ENCODE measurements at regions of chr15 and their contacts with region 1.

Region 1: GRCh38 chr15:75647370-75648155 is at the start of gene SNX33:
- DNase-seq: peak; percentile 78
- ATAC-seq: peak; percentile 74
- H3K4me3 ChIP-seq: peak within 1 kb of the TSS; percentile 83 to 96 (median 93)
- H3K27ac ChIP-seq: peak within 1 kb of the TSS; percentile 98
- H3K4me1 ChIP-seq: peaks cover 50% of the 10 kb centered on the region
- H3K27me3 ChIP-seq: peaks cover 0 to 2% of the 10 kb centered on the region in 2 experiments; a peak in 1 of 5 replicates
- CTCF ChIP-seq: peak; percentile 70
- EP300 ChIP-seq: no peak
- POLR2A ChIP-seq: no peak; a peak in 1 of 4 replicates
- RAD21 ChIP-seq: no peak
- total RNA-seq, gene SNX33: 10.8 and 11.0 TPM in 2 replicates

Region 2: GRCh38 chr15:75453703-75454470 is 193.7 kb before region 1 on chr15:
- CTCF ChIA-PET with region 1: no interaction called
- POLR2A ChIA-PET with region 1: interaction called, 45 read pairs
- in situ Hi-C with region 1: no loop called
- intact Hi-C with region 1: no loop called
- DNase-seq: peak; percentile 100
- ATAC-seq: peak; percentile 38
- H3K4me3 ChIP-seq: peak overlapping the region; percentile 91 to 93 (median 93)
- H3K27ac ChIP-seq: peak overlapping the region; percentile 94
- H3K4me1 ChIP-seq: peaks cover 37% of the 10 kb centered on the region
- H3K27me3 ChIP-seq: no peaks in the 10 kb centered on the region; a peak in 1 of 5 replicates
- CTCF ChIP-seq: no peak
- EP300 ChIP-seq: no peak
- POLR2A ChIP-seq: peak in 1 of 2 experiments; percentile 62; a peak in 2 of 4 replicates
- RAD21 ChIP-seq: no peak

Region 3: GRCh38 chr15:75578948-75579920 is 68.3 kb before region 1 on chr15 and contains the start of gene PTPN9:
- CTCF ChIA-PET with region 1: no interaction called
- POLR2A ChIA-PET with region 1: interaction called, 13 read pairs
- in situ Hi-C with region 1: no loop called
- intact Hi-C with region 1: no loop called
- DNase-seq: peak; percentile 66
- ATAC-seq: peak; percentile 88
- H3K4me3 ChIP-seq: peak within 1 kb of the TSS; percentile 74 to 100 (median 87)
- H3K27ac ChIP-seq: peak within 1 kb of the TSS; percentile 93
- H3K4me1 ChIP-seq: peaks cover 37% of the 10 kb centered on the region
- H3K27me3 ChIP-seq: no peaks in the 10 kb centered on the region; a peak in 2 of 5 replicates
- CTCF ChIP-seq: peak; percentile 57
- EP300 ChIP-seq: no peak
- POLR2A ChIP-seq: peak in 1 of 2 experiments; percentile 28; a peak in 2 of 4 replicates
- RAD21 ChIP-seq: no peak
- total RNA-seq, gene PTPN9: 16.5 and 16.6 TPM in 2 replicates

Region 4: DNA sequence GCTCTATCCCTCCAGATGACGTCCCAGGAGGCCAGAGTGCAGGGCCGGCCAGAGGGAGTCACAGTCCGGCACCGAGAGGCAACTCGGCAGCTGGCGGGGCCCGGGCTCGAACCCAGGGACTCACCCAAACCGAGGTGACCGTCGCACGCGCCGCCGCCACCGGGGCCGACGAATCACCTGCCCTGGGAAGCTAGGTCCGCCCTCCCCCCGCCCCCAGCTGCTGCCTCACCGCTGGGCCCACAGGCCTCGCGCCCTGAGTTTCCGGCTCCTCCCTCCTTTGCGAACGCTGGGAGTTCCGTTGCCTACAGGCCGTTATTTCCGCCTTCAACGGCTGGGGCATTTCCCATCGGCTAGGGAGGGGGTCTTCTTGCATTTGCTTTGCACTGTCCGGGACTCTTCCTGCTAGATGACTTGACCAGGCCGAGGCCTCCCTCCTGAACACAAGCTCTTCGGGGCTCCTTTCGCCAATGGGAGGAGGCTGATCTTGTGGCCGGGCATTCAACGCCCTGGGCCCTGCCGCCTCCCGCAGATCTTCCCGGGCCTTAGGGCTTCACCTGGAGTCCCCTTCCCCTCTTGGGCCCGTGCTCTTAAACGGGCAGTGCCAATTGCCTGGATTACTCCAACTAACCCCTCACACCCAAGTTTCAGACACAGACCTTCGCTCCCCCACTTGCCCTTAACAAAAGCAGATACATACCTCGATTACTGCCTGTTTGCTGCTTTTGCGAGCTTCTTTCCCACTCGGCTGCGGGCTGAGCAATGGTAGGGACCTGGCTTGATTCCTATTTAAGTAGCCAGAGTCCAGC is 21.8 kb before region 1 on chr15 and contains the start of gene SNUPN:
- CTCF ChIA-PET with region 1: no interaction called
- POLR2A ChIA-PET with region 1: interaction called, 19 read pairs
- in situ Hi-C with region 1: no loop called
- intact Hi-C with region 1: no loop called
- DNase-seq: peak; percentile 91
- ATAC-seq: peak; percentile 91
- H3K4me3 ChIP-seq: peak within 1 kb of the TSS; percentile 89 to 100 (median 100)
- H3K27ac ChIP-seq: peak within 1 kb of the TSS; percentile 99
- H3K4me1 ChIP-seq: peaks cover 20% of the 10 kb centered on the region
- H3K27me3 ChIP-seq: no peaks in the 10 kb centered on the region; a peak in 1 of 5 replicates
- CTCF ChIP-seq: no peak
- EP300 ChIP-seq: peak in 1 of 2 experiments; percentile 52; a peak in 1 of 4 replicates
- POLR2A ChIP-seq: peak; percentile 45 to 76; a peak in 3 of 4 replicates
- RAD21 ChIP-seq: peak; percentile 9; the same call in 1 of the 2 replicates
- total RNA-seq, gene SNUPN: 16.4 and 18.3 TPM in 2 replicates

Region 5: GRCh38 chr15:75661091-75661777 is 13.7 kb after region 1 on chr15:
- CTCF ChIA-PET with region 1: no interaction called
- POLR2A ChIA-PET with region 1: interaction called, 16 read pairs
- in situ Hi-C with region 1: no loop called
- intact Hi-C with region 1: no loop called
- DNase-seq: peak; percentile 45
- ATAC-seq: peak; percentile 87
- H3K4me3 ChIP-seq: peak overlapping the region in 1 of 3 experiments; percentile 27; a peak in 2 of 6 replicates
- H3K27ac ChIP-seq: no peak overlapping the region
- H3K4me1 ChIP-seq: peaks cover 48% of the 10 kb centered on the region
- H3K27me3 ChIP-seq: no peaks in the 10 kb centered on the region
- CTCF ChIP-seq: no peak
- EP300 ChIP-seq: no peak
- POLR2A ChIP-seq: no peak
- RAD21 ChIP-seq: no peak

Region 6: GRCh38 chr15:75684642-75685041 is 37.1 kb after region 1 on chr15:
- CTCF ChIA-PET with region 1: no interaction called
- POLR2A ChIA-PET with region 1: interaction called, 4 read pairs
- in situ Hi-C with region 1: loop called (anchors 5 kb)
- intact Hi-C with region 1: loop called (anchors 2 kb)
- DNase-seq: peak; percentile 56
- ATAC-seq: peak; percentile 44
- H3K4me3 ChIP-seq: peak overlapping the region in 1 of 3 experiments; percentile 33; a peak in 1 of 6 replicates
- H3K27ac ChIP-seq: no peak overlapping the region
- H3K4me1 ChIP-seq: peaks cover 41% of the 10 kb centered on the region
- H3K27me3 ChIP-seq: peaks cover 6 to 25% of the 10 kb centered on the region in 2 experiments
- CTCF ChIP-seq: peak; percentile 69
- EP300 ChIP-seq: no peak
- POLR2A ChIP-seq: no peak
- RAD21 ChIP-seq: peak; percentile 44; the same call in 1 of the 2 replicates

Region 7: DNA sequence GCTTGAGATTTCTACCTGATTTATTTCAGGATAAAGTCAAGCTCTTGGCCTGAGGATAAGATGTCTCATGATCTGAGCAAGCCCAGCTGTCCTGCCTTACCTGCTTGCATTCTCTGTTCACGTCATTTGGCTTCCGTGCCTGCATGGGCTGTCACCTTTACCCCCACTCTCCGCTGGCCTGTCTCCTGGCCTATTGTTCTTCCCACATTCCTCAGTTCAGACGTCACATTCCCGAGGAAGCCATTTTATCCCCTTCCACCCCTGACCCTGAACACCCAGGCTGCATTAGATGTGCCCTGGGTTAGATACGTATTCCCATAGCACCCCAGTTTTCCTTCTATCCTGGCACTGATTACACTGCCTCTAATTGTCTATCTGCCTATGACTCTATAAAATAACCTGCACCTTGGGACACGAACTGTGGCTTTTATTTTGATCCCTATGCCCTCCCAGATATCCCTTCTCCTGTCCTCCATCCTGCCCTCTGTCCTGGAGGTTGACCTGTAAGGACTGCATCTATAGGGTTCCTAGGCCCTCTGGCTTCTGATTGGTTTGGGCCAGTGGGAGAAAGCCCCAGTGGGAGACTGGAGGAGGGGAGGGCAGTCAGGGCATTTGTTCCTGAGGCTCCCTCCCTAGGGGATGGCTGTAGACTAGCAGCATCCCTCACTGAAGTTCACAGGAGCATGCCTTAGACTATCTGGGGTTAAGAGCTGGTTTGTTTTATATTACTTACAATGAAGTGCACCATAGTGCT is 176.5 kb after region 1 on chr15:
- CTCF ChIA-PET with region 1: no interaction called
- POLR2A ChIA-PET with region 1: no interaction called
- in situ Hi-C with region 1: no loop called
- intact Hi-C with region 1: no loop called
- DNase-seq: peak; percentile 42
- ATAC-seq: peak; percentile 51; the same call in 2 of the 3 replicates
- H3K4me3 ChIP-seq: no peak overlapping the region; a peak in 1 of 6 replicates
- H3K27ac ChIP-seq: no peak overlapping the region
- H3K4me1 ChIP-seq: peaks cover 7% of the 10 kb centered on the region
- H3K27me3 ChIP-seq: peaks cover 0 to 17% of the 10 kb centered on the region in 2 experiments; a peak in 2 of 5 replicates
- CTCF ChIP-seq: no peak
- EP300 ChIP-seq: no peak
- POLR2A ChIP-seq: no peak
- RAD21 ChIP-seq: no peak

Region 8: GRCh38 chr15:75836953-75837321 is 189.4 kb after region 1 on chr15:
- CTCF ChIA-PET with region 1: no interaction called
- POLR2A ChIA-PET with region 1: no interaction called
- in situ Hi-C with region 1: no loop called
- intact Hi-C with region 1: no loop called
- DNase-seq: no peak
- ATAC-seq: no peak
- H3K4me3 ChIP-seq: no peak overlapping the region
- H3K27ac ChIP-seq: no peak overlapping the region
- H3K4me1 ChIP-seq: peaks cover 5% of the 10 kb centered on the region; the same call in 1 of the 2 replicates
- H3K27me3 ChIP-seq: peaks cover 4 to 7% of the 10 kb centered on the region in 2 experiments; a peak in 2 of 5 replicates
- CTCF ChIP-seq: no peak
- EP300 ChIP-seq: no peak
- POLR2A ChIP-seq: no peak
- RAD21 ChIP-seq: no peak

Region 9: DNA sequence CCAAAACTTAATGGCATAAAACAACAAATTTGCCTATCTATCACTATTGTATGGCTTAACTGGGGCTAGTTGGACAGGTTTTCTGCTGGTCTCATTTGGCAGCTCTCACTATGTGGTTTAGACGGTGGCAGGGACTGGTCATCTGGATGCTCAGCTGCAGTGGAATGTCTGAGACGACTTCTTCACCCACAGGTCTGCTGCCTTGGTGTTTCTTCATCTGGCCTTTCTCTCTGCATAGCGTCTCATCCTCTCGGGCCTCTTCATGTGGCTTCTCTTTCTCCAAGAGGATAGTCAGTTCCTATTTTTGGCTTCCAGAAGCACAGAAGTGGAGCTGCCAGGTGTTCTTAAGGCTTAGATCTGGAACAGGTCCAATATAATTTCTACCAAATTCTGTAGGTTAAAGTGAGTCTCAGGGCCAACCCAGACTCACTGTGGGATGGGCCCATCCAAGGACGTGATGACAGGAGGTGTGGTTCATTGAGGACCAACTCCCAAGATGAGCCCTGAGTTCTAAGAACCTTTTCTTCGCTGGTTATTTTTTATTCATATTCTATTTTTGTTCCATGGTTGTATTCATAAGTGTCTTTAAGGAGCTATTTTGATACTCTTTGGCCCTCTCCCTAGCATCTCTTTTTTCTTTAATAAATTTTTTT is 214.3 kb after region 1 on chr15:
- CTCF ChIA-PET with region 1: no interaction called
- POLR2A ChIA-PET with region 1: no interaction called
- in situ Hi-C with region 1: no loop called
- intact Hi-C with region 1: no loop called
- DNase-seq: no peak
- ATAC-seq: no peak
- H3K4me3 ChIP-seq: no peak overlapping the region
- H3K27ac ChIP-seq: no peak overlapping the region
- H3K4me1 ChIP-seq: peaks cover 5% of the 10 kb centered on the region; the same call in 1 of the 2 replicates
- H3K27me3 ChIP-seq: no peaks in the 10 kb centered on the region; a peak in 1 of 5 replicates
- CTCF ChIP-seq: no peak
- EP300 ChIP-seq: no peak
- POLR2A ChIP-seq: no peak
- RAD21 ChIP-seq: no peak